MCF 10A (cell line): ENCODE measurements at regions of chr3 and their contacts with region 1.

Region 1: GRCh38 chr3:150408221-150409102 is at the start of gene TSC22D2:
- DNase-seq: peak; percentile 76
- H3K4me3 Mint-ChIP-seq: peak within 1 kb of the TSS; percentile 74
- H3K27ac Mint-ChIP-seq: peak within 1 kb of the TSS; percentile 99
- H3K4me1 Mint-ChIP-seq: peaks cover 17% of the 10 kb centered on the region
- H3K27me3 Mint-ChIP-seq: no peaks in the 10 kb centered on the region
- CTCF ChIP-seq: peak; percentile 10
- total RNA-seq, gene TSC22D2: 31.2 and 36.2 TPM in 2 replicates

Region 2: GRCh38 chr3:149638228-149639092 is 770.0 kb before region 1 on chr3:
- CTCF ChIA-PET with region 1: no interaction called
- POLR2A ChIA-PET with region 1: no interaction called
- intact Hi-C with region 1: no loop called
- DNase-seq: no peak
- H3K4me3 Mint-ChIP-seq: no peak overlapping the region
- H3K27ac Mint-ChIP-seq: peak overlapping the region; percentile 51
- H3K4me1 Mint-ChIP-seq: peaks cover 20% of the 10 kb centered on the region
- H3K27me3 Mint-ChIP-seq: no peaks in the 10 kb centered on the region
- CTCF ChIP-seq: no peak

Region 3: DNA sequence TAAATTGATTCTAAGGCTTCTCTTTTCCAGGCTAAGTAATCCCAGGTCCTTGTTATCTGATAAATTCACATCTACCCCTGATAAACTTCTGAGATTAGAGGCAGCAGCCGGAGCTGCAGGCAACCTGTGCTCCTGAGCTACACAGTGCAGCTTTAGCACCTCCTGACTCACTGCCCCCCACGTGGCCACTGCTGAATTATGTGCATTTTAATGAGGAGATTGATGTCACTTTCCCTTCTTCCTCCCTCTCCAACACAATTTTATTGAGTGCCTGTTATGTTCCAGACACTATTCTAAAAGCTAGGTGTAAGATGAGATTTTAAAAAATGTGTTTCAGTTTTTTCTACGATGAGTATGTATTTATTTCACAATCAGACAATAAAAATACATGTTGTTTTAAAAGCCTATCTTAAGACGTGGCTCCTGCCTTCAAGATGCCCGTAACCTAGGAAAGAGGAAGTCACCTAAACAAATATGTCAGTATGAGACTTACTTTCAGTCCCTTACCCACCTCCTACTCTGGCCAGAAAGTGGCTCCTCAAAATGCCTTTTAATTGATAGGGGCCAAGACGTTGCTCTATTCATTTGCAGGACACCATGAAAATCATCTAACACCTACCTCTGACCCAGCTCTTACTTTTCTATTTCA is 276.2 kb before region 1 on chr3:
- CTCF ChIA-PET with region 1: no interaction called
- POLR2A ChIA-PET with region 1: no interaction called
- intact Hi-C with region 1: no loop called
- DNase-seq: peak; percentile 21
- H3K4me3 Mint-ChIP-seq: no peak overlapping the region
- H3K27ac Mint-ChIP-seq: no peak overlapping the region
- H3K4me1 Mint-ChIP-seq: no peaks in the 10 kb centered on the region
- H3K27me3 Mint-ChIP-seq: peaks cover 11% of the 10 kb centered on the region
- CTCF ChIP-seq: no peak

Region 4: DNA sequence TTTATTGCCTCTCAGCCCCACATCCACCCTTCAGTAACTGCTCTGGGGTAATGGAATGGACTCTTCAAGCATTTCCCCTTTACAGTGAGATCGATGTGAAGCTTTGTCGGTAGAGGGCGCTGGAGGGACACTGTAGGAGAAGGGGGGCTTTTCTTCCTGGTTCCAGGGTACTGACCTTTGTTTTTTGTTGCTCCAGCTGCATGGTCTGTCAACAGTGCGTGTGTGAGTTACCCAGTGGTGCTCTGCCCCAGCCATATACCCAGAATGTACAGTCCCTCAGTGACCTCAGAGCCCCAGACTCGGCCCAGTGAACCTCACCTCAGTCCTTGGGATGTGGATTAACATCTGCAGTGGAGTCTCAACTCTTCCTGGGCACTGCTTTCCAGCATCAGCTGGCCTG is 180.6 kb before region 1 on chr3:
- CTCF ChIA-PET with region 1: interaction called, 5 read pairs
- POLR2A ChIA-PET with region 1: interaction called, 3 read pairs
- intact Hi-C with region 1: loop called (anchors 2 kb)
- DNase-seq: peak; percentile 74
- H3K4me3 Mint-ChIP-seq: no peak overlapping the region
- H3K27ac Mint-ChIP-seq: no peak overlapping the region
- H3K4me1 Mint-ChIP-seq: peaks cover under 1% of the 10 kb centered on the region
- H3K27me3 Mint-ChIP-seq: no peaks in the 10 kb centered on the region
- CTCF ChIP-seq: peak; percentile 67

Region 5: DNA sequence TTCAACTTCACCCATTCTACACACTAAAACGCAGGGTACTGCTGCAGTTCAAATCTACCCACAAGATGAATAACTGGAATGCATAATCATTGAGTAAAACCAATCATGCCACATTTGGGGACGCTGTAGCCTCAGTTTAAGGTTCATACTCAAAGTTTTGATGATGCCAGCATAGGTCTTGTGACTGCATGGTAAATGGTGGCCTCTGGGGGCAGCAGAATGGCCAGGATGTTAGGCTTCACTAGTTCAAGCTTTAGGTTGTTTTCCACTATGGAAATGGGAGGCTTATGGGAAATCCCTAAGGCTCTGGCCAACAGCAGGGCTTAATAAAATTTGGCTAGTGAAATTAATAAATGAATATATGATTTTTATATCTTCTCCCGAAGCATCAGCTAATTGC is 104.7 kb before region 1 on chr3:
- CTCF ChIA-PET with region 1: interaction called, 5 read pairs
- POLR2A ChIA-PET with region 1: interaction called, 3 read pairs
- intact Hi-C with region 1: loop called (anchors 5 kb)
- DNase-seq: peak; percentile 39
- H3K4me3 Mint-ChIP-seq: no peak overlapping the region
- H3K27ac Mint-ChIP-seq: no peak overlapping the region
- H3K4me1 Mint-ChIP-seq: peaks cover 19% of the 10 kb centered on the region
- H3K27me3 Mint-ChIP-seq: no peaks in the 10 kb centered on the region
- CTCF ChIP-seq: peak; percentile 23

Region 6: GRCh38 chr3:150348500-150348899 is 60.0 kb before region 1 on chr3:
- CTCF ChIA-PET with region 1: interaction called, 45 read pairs
- POLR2A ChIA-PET with region 1: interaction called, 103 read pairs
- intact Hi-C with region 1: loop called (anchors 2 kb)
- DNase-seq: peak; percentile 93
- H3K4me3 Mint-ChIP-seq: peak overlapping the region; percentile 8
- H3K27ac Mint-ChIP-seq: peak overlapping the region; percentile 91
- H3K4me1 Mint-ChIP-seq: peaks cover 50% of the 10 kb centered on the region
- H3K27me3 Mint-ChIP-seq: no peaks in the 10 kb centered on the region
- CTCF ChIP-seq: no peak

Region 7: GRCh38 chr3:150391200-150391599 is 17.3 kb before region 1 on chr3:
- CTCF ChIA-PET with region 1: no interaction called
- POLR2A ChIA-PET with region 1: interaction called, 67 read pairs
- intact Hi-C with region 1: no loop called
- DNase-seq: peak; percentile 38
- H3K4me3 Mint-ChIP-seq: no peak overlapping the region
- H3K27ac Mint-ChIP-seq: no peak overlapping the region
- H3K4me1 Mint-ChIP-seq: peaks cover 5% of the 10 kb centered on the region
- H3K27me3 Mint-ChIP-seq: no peaks in the 10 kb centered on the region
- CTCF ChIP-seq: no peak

Region 8: GRCh38 chr3:150449169-150449721 is 40.8 kb after region 1 on chr3:
- CTCF ChIA-PET with region 1: interaction called, 4 read pairs
- POLR2A ChIA-PET with region 1: interaction called, 30 read pairs
- intact Hi-C with region 1: loop called (anchors 2 kb)
- DNase-seq: peak; percentile 56
- H3K4me3 Mint-ChIP-seq: peak overlapping the region; percentile 43
- H3K27ac Mint-ChIP-seq: peak overlapping the region; percentile 44
- H3K4me1 Mint-ChIP-seq: peaks cover 34% of the 10 kb centered on the region
- H3K27me3 Mint-ChIP-seq: no peaks in the 10 kb centered on the region
- CTCF ChIP-seq: no peak

Region 9: DNA sequence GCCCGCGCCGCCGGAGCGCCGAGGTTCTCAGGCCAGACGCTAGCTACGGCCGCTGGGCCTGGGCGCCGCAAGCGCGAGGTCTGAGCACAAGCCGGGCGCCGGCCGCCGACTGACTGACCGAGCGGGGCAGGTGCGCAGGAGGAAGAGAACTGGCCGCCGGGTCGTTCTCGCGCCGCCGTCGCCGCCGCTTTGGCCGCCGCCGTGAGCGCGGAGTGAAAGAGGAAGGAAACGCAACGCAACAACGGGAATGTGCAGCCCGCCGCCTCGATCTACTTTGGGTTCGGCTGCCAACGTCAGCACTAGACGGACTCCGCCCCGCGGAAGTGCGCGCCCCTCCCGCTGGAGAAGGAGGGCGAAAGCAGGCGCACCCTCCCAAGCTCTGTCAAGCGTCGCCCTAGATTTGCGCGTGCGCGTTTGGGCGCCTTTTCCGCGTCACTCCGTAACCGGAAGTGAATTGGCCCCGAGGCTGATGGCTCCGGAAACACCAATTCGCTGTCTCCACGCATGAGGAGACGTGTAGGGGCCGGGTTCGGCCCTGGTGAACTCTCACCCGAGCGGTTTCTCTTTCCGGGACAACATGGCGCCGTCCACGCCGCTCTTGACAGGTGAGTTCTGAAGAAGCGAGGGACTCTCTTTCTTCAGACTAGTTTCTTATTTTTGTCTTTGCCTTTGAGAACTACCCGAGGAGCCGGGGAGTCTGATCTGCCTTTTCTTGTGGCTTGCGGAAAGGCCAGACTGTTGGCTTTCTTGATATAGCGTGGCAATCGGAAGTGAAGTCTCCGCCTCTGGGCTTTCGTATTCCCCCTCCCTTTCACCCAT is 138.0 kb after region 1 on chr3 and contains the starts of genes EIF2A and SERP1:
- CTCF ChIA-PET with region 1: interaction called, 6 read pairs
- POLR2A ChIA-PET with region 1: interaction called, 106 read pairs
- intact Hi-C with region 1: loop called (anchors 2 kb)
- DNase-seq: peak; percentile 99
- H3K4me3 Mint-ChIP-seq: peak within 1 kb of the TSS; percentile 83
- H3K27ac Mint-ChIP-seq: peak within 1 kb of the TSS; percentile 99
- H3K4me1 Mint-ChIP-seq: peaks cover 17% of the 10 kb centered on the region
- H3K27me3 Mint-ChIP-seq: no peaks in the 10 kb centered on the region
- CTCF ChIP-seq: no peak
- total RNA-seq, gene EIF2A: 112 and 117 TPM in 2 replicates
- total RNA-seq, gene SERP1: 227 and 308 TPM in 2 replicates